HCT116 (cell line): ENCODE measurements at regions of chr9 and their contacts with region 1.

Region 1: GRCh38 chr9:84697509-84698114 is 28.1 kb downstream of the NTRK2 start:
- DNase-seq: peak; percentile 32
- ATAC-seq: peak; percentile 98
- H3K4me3 ChIP-seq: no peak overlapping the region
- H3K27ac ChIP-seq: no peak overlapping the region
- H3K4me1 ChIP-seq: no peaks in the 10 kb centered on the region; a peak in 1 of 4 replicates
- H3K27me3 ChIP-seq: no peaks in the 10 kb centered on the region
- CTCF ChIP-seq: peak; percentile 54 to 83 (median 74); a peak in 5 of 6 replicates
- POLR2A ChIP-seq: no peak
- RAD21 ChIP-seq: peak; percentile 78

Region 2: GRCh38 chr9:84781458-84781857 is 83.8 kb after region 1 on chr9:
- CTCF ChIA-PET with region 1: interaction called, 4 read pairs
- POLR2A ChIA-PET with region 1: no interaction called
- RAD21 ChIA-PET with region 1: no interaction called
- intact Hi-C with region 1: loop called (anchors 5 kb)
- DNase-seq: no peak
- ATAC-seq: no peak
- H3K4me3 ChIP-seq: no peak overlapping the region
- H3K27ac ChIP-seq: no peak overlapping the region
- H3K4me1 ChIP-seq: no peaks in the 10 kb centered on the region
- H3K27me3 ChIP-seq: peaks cover 16% of the 10 kb centered on the region
- CTCF ChIP-seq: peak; percentile 36 to 59 (median 44); a peak in 5 of 6 replicates
- POLR2A ChIP-seq: no peak
- RAD21 ChIP-seq: peak; percentile 45

Region 3: DNA sequence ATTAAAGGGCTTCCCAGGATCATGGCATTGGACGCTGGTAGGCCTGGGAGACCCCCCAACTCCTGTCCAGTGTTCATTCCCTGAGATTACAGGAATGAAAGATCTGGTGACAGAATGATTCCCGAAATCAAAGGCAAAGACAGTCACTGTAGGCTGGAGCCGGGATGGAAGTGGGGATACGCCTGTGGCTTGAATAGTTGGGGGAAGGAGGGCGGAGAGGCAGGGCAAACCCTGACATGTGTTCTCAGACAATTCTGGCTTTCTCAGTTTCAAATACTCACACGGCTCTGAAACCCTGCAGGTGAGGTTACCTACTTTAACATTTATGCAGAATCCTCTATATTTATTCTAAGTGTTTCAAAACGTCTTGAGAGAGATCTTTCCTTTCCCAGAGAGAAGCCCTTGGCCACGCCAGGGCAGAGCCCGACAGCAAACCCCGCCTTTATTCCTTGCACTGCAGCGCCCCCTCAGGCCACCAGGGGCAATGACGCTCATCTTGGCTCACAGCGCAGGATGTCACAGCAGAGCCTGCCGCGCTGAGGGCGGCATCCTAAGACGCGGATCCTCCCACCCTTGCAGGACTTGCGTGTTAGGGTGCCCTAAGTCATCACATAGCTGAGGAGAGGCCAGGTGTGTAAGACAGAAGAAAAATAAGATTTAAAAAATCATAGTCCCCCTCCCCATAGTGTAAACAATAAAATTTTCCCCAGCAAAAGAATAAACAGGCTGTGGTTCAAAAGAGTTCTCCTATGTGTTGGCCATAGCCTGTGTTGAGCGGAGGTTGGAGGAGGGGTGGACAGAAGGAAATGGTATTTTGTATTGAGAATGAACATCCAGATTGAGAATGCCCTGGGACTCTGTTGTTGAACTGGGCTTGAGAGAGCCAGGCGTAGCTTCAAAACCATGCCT is 256.4 kb after region 1 on chr9:
- CTCF ChIA-PET with region 1: no interaction called
- POLR2A ChIA-PET with region 1: no interaction called
- RAD21 ChIA-PET with region 1: no interaction called
- intact Hi-C with region 1: loop called (anchors 2 kb)
- DNase-seq: peak; percentile 48
- ATAC-seq: peak; percentile 99
- H3K4me3 ChIP-seq: no peak overlapping the region
- H3K27ac ChIP-seq: no peak overlapping the region
- H3K4me1 ChIP-seq: 0 out of 4 replicates have a peak, but pooled peaks cover 0 to 3% of the 10 kb centered on the region in 2 experiments
- H3K27me3 ChIP-seq: no peaks in the 10 kb centered on the region
- CTCF ChIP-seq: peak; percentile 77 to 96 (median 96)
- POLR2A ChIP-seq: no peak
- RAD21 ChIP-seq: peak; percentile 78

Region 4: GRCh38 chr9:84966876-84967833 is 269.5 kb after region 1 on chr9:
- CTCF ChIA-PET with region 1: no interaction called
- POLR2A ChIA-PET with region 1: no interaction called
- RAD21 ChIA-PET with region 1: no interaction called
- intact Hi-C with region 1: no loop called
- DNase-seq: no peak
- ATAC-seq: peak; percentile 53; the same call in 1 of the 2 replicates
- H3K4me3 ChIP-seq: no peak overlapping the region
- H3K27ac ChIP-seq: no peak overlapping the region
- H3K4me1 ChIP-seq: no peaks in the 10 kb centered on the region; a peak in 1 of 4 replicates
- H3K27me3 ChIP-seq: peaks cover 25% of the 10 kb centered on the region; the same call in 1 of the 2 replicates
- CTCF ChIP-seq: peak in 2 of 3 experiments; percentile 38 to 39; a peak in 4 of 6 replicates
- POLR2A ChIP-seq: no peak
- RAD21 ChIP-seq: no peak

Region 5: DNA sequence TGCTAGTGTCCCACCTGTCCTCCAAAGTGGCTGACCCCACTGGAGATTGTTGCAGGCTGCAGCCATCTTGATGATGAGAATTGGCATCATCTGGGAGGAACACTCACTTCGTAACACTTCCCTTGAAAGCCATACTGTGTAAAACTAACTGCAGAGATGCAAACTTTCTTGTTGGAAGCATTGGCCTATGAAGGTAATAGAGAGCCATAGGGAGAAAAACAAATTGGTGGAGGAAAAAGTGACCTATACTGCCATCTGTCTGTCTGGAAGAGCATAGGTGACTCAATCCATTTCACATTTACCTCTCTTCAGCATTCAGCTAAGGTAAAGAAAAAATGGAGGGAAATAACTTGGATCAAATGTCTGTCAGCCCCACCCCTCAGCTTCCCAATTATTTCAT is 445.4 kb after region 1 on chr9:
- CTCF ChIA-PET with region 1: interaction called, 4 read pairs
- POLR2A ChIA-PET with region 1: no interaction called
- RAD21 ChIA-PET with region 1: no interaction called
- intact Hi-C with region 1: loop called (anchors 1 kb)
- DNase-seq: peak; percentile 4
- ATAC-seq: peak; percentile 83
- H3K4me3 ChIP-seq: no peak overlapping the region
- H3K27ac ChIP-seq: no peak overlapping the region
- H3K4me1 ChIP-seq: no peaks in the 10 kb centered on the region
- H3K27me3 ChIP-seq: peaks cover 15% of the 10 kb centered on the region
- CTCF ChIP-seq: peak; percentile 35 to 66 (median 61); a peak in 5 of 6 replicates
- POLR2A ChIP-seq: no peak
- RAD21 ChIP-seq: peak; percentile 53

Region 6: GRCh38 chr9:85258823-85259370 is 561.3 kb after region 1 on chr9:
- CTCF ChIA-PET with region 1: interaction called, 15 read pairs
- POLR2A ChIA-PET with region 1: interaction called, 3 read pairs
- RAD21 ChIA-PET with region 1: interaction called in 1 of 2 experiments, 7 read pairs
- intact Hi-C with region 1: loop called (anchors 1 kb)
- DNase-seq: peak; percentile 63
- ATAC-seq: peak; percentile 100
- H3K4me3 ChIP-seq: no peak overlapping the region
- H3K27ac ChIP-seq: no peak overlapping the region
- H3K4me1 ChIP-seq: peaks cover 0 to 11% of the 10 kb centered on the region in 2 experiments; a peak in 1 of 4 replicates
- H3K27me3 ChIP-seq: 0 out of 2 replicates have a peak, but pooled peaks cover 6% of the 10 kb centered on the region
- CTCF ChIP-seq: peak; percentile 64 to 83 (median 82); a peak in 5 of 6 replicates
- POLR2A ChIP-seq: no peak
- RAD21 ChIP-seq: peak; percentile 90

Region 7: GRCh38 chr9:85425153-85425611 is 727.6 kb after region 1 on chr9:
- CTCF ChIA-PET with region 1: no interaction called
- POLR2A ChIA-PET with region 1: no interaction called
- RAD21 ChIA-PET with region 1: no interaction called
- intact Hi-C with region 1: loop called (anchors 1 kb)
- DNase-seq: peak; percentile 69
- ATAC-seq: peak; percentile 97
- H3K4me3 ChIP-seq: no peak overlapping the region
- H3K27ac ChIP-seq: no peak overlapping the region
- H3K4me1 ChIP-seq: no peaks in the 10 kb centered on the region
- H3K27me3 ChIP-seq: peaks cover 15% of the 10 kb centered on the region
- CTCF ChIP-seq: peak; percentile 79 to 86 (median 83)
- POLR2A ChIP-seq: no peak
- RAD21 ChIP-seq: peak; percentile 83